Tibial artery (tissue), 4 donors: ENCODE measurements at regions of chr21 and their contacts with region 1.

Region 1: DNA sequence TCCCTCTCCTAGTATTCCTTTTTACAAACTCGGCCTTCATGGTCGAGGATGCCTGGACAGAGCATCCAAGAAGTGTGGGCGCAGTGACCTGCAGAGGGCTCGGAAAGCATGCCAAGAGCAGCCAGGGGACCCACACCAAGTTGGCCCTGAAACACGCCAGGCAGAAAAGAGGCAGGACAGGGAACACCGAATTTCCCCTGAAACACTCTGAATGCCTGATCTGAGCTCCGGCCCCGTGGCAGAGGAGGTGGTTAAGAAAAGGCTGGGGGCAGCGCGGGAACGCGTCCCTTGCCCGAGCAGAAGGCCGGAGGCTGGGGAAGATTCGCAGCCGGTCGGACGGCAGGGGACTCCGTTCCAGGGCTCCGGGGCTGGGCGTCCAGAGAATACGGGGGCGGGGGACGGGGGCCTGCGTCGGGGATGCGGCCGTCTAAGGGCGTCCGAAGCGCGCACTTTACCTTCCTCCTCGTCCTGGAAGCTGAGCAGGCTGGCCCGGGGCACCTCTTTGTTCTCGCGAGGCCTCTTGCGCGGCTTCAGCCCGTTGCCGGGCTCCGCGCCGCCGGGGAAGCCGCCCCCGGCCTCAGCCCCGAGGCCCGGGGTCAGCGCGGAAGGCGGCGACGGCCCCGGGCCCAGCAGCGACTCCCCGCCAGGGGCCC is 558 bp downstream of the PAXBP1 start:
- DNase-seq: peak; percentile 47 to 80
- H3K4me3 ChIP-seq: peak overlapping the region; percentile 61 to 91
- H3K27ac ChIP-seq: peak overlapping the region; percentile 85 to 91
- H3K4me1 ChIP-seq: peaks cover 0 to 39% (median 22%) of the 10 kb centered on the region in 4 donors
- H3K27me3 ChIP-seq: no peaks in the 10 kb centered on the region
- CTCF ChIP-seq: no peak

Region 2: GRCh38 chr21:32612075-32612998 is 158.7 kb before region 1 on chr21 and contains the start of gene CFAP298:
- intact Hi-C with region 1: loop called (anchors 10 kb)
- DNase-seq: peak; percentile 84 to 91
- H3K4me3 ChIP-seq: peak within 1 kb of the TSS; percentile 93 to 95
- H3K27ac ChIP-seq: peak within 1 kb of the TSS; percentile 89 to 95
- H3K4me1 ChIP-seq: peaks cover 3 to 21% (median 13%) of the 10 kb centered on the region in 4 donors
- H3K27me3 ChIP-seq: no peaks in the 10 kb centered on the region
- CTCF ChIP-seq: no peak